Body of pancreas (tissue), 4 donors: ENCODE measurements at regions of chr12 and their contacts with region 1.

Region 1: DNA sequence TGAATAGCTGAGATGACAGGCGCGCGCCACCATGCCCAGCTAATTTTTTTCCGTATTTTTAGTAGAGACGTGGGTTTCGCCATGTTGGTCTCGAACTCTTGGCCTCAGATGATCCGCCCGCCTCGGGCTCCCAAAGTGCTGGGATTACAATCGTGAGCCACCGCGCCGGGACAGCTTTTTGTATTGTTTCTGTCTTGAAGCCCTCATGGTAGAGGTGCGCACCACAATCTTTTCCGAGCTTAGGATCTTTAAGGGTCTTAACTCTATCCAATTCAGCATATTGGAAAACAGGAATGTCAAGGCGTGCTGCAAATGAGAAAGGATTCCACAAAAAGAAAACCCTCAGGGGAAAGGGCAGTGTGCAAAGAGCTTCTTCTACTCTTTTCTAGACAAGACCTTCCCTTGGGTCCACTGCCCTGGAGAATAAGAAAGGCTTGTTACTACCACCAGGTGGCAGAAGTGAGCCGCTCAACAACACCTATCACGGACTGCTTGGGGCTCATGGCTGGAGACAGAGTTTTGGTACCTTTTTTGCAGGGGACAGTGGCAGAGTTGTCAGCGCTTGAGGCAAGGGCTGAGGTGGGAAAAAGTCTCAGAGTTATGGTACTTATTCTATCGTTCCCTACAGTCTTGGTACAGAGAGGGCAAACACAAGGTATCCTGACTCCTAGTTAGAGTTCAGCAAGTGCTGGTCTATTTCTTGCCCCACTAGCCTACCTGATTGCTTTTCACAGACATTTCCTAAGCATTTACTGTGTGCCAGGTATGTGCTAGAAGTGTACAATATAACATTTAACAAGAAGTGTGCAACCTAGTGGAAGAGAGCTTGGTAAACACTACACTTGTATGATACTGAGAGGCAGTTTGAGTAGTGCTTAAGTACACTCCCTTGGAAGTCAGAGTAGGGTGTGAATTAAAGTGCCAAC is 16.4 kb upstream of the SP7 start:
- DNase-seq: peak; percentile 87 to 91 (median 88)
- ATAC-seq: peak; percentile 97
- H3K4me3 ChIP-seq: no peak overlapping the region
- H3K27ac ChIP-seq: no peak overlapping the region
- H3K4me1 ChIP-seq: peaks cover 8% of the 10 kb centered on the region
- H3K27me3 ChIP-seq: no peaks in the 10 kb centered on the region
- CTCF ChIP-seq: peak; percentile 81 to 94 (median 88)
- POLR2A ChIP-seq: no peak

Region 2: DNA sequence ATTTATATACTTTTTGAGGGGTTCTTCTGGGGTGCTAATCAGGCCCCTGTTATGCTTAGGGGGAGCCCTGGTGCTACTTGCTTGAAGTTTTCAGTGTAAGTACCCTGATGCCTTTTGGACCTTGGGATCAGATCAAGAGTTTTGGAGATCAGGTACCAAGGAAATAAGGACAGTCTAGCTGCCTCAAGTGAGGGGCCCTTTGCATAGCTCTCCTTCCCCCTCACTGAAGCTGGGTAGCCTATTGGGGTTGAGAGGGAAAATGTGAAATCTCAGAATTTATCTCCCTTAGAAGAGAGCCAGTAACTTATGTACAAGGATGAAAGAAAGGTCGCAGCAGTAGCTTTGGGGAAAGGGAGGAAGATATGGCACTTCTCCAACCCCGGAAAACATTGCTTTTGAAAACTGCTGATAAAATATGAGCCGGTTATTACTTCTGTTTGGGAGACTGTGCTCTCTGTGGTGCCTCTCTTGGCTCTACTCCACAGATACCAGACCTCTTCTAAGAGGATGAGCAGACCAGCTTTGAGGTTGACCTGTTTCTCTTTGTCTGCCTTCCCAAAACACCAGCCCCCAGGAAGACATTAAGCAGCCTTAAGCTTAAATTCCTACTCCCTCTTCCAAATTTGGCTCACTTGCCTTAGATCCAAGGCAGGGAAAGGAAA is 62.3 kb after region 1 on chr12:
- intact Hi-C with region 1: loop called (anchors 5 kb)
- DNase-seq: no peak
- ATAC-seq: no peak
- H3K4me3 ChIP-seq: no peak overlapping the region
- H3K27ac ChIP-seq: no peak overlapping the region
- H3K4me1 ChIP-seq: no peaks in the 10 kb centered on the region
- H3K27me3 ChIP-seq: no peaks in the 10 kb centered on the region
- CTCF ChIP-seq: no peak
- POLR2A ChIP-seq: no peak

Region 3: GRCh38 chr12:53500776-53501614 is 148.4 kb after region 1 on chr12 and contains the start of gene TARBP2:
- intact Hi-C with region 1: loop called (anchors 10 kb)
- DNase-seq: peak; percentile 98 to 99 (median 98)
- ATAC-seq: peak; percentile 91
- H3K4me3 ChIP-seq: peak within 1 kb of the TSS; percentile 53 to 60
- H3K27ac ChIP-seq: peak within 1 kb of the TSS; percentile 93 to 99 (median 96)
- H3K4me1 ChIP-seq: peaks cover 43% of the 10 kb centered on the region
- H3K27me3 ChIP-seq: no peaks in the 10 kb centered on the region
- CTCF ChIP-seq: peak in 4 of 7 experiments; percentile 9 to 26 (median 13)
- POLR2A ChIP-seq: peak; percentile 43 to 61 (median 56)
- total RNA-seq, gene TARBP2: 36.6 to 66.9 TPM